Ovary (tissue), 10 donors: ENCODE measurements at regions of chr20 and their contacts with region 1.

Region 1: DNA sequence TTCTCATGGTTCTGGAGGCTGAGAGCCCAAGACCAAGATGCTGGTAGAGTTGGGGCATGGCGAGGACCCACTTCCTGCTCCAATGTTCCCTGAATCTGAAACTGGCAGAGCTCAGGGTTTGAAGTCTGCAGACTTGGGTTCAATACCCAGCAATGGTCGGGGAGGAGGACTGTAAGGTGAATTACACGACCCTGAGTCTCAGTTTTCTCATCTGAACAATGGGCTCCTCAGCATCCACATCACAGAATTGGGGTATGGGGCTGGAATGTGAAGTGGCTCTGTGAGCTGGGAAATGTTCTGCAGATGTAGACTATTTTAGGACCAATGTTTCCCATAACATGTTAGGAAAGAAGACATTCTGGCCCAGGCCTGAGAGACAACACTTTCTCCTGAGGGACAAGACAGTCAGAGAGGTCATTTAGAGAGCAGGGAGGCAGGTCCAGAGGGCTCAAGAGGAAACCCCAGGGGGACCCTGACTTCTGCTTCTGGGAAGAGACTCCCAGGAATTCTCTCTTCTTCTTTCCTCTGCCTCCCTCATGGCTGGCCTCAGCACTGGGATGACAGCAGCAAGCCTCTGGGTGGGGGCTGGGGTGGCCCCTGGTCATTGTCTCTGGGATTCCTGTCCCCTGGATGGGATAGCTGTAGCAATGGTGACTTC is 141.3 kb upstream of the PMEPA1 start:
- DNase-seq: no peak
- H3K4me3 ChIP-seq: no peak overlapping the region
- H3K27ac ChIP-seq: no peak overlapping the region
- H3K4me1 ChIP-seq: no peaks in the 10 kb centered on the region
- H3K27me3 ChIP-seq: no peaks in the 10 kb centered on the region
- CTCF ChIP-seq: no peak
- EP300 ChIP-seq: no peak
- POLR2A ChIP-seq: no peak

Region 2: GRCh38 chr20:57560554-57561355 is 290.4 kb before region 1 on chr20 and contains the start of gene PCK1:
- intact Hi-C with region 1: no loop called
- DNase-seq: peak; percentile 53 to 83 (median 72)
- H3K4me3 ChIP-seq: peak within 1 kb of the TSS; percentile 20
- H3K27ac ChIP-seq: no peak within 1 kb of the TSS
- H3K4me1 ChIP-seq: peaks cover 5% of the 10 kb centered on the region
- H3K27me3 ChIP-seq: no peaks in the 10 kb centered on the region
- CTCF ChIP-seq: no peak
- EP300 ChIP-seq: no peak
- POLR2A ChIP-seq: no peak
- total RNA-seq, gene PCK1: 0.47 to 133 (median 2.0) TPM

Region 3: DNA sequence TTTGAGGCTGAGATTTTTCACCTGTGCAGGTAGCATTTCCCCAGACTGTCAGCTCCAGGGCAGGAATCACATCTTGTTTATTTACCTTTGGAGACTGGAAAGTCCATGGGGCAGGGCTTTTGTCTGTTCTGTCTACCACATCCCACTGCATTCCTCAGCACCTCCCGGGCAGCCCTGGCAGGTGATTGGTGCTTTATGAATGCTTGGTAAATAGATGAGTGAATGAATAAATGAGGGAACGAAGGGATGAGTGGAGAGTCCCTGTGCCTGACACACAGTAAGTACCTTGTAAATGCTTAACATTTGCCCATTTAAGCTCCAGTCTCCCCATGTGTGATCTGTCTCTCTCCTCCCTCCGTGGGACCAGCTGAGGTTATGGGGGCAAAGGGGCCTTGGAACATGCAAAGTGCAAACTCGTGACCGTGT is 71.7 kb before region 1 on chr20:
- intact Hi-C with region 1: loop called in 1 of 4 experiments (anchors 2 kb)
- DNase-seq: no peak
- H3K4me3 ChIP-seq: no peak overlapping the region
- H3K27ac ChIP-seq: no peak overlapping the region
- H3K4me1 ChIP-seq: no peaks in the 10 kb centered on the region
- H3K27me3 ChIP-seq: no peaks in the 10 kb centered on the region
- CTCF ChIP-seq: no peak
- EP300 ChIP-seq: no peak
- POLR2A ChIP-seq: no peak

Region 4: GRCh38 chr20:58188527-58188926 is 337.4 kb after region 1 on chr20:
- intact Hi-C with region 1: no loop called
- DNase-seq: no peak
- H3K4me3 ChIP-seq: no peak overlapping the region
- H3K27ac ChIP-seq: no peak overlapping the region
- H3K4me1 ChIP-seq: no peaks in the 10 kb centered on the region
- H3K27me3 ChIP-seq: no peaks in the 10 kb centered on the region
- CTCF ChIP-seq: no peak
- EP300 ChIP-seq: no peak
- POLR2A ChIP-seq: no peak